GM12878 (cell line): ENCODE measurements at regions of chr1 and their contacts with region 1.

Region 1: DNA sequence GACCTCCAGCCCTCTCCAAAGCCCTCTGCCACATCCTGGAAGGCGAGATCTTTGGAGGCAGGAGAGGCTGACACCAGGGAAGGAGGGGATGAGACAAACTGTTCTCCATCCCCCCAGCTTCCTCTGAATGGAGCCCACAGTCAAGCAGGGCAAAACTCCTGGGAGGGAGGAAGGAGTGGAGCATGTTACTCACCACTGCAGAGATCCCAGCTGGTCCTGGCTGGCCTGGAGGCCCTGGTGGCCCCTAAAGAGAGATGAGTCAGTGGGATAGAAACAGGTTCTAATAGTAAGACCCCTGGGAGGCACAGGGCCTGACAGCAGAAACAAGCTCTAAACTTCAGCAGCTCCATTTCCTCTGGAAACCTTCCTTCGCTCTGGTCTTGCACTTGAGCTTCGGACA is 14.0 kb upstream of the PEF1 start:
- DNase-seq: no peak
- ATAC-seq: no peak
- H3K4me3 ChIP-seq: no peak overlapping the region
- H3K27ac ChIP-seq: no peak overlapping the region
- H3K4me1 ChIP-seq: no peaks in the 10 kb centered on the region
- H3K27me3 ChIP-seq: no peaks in the 10 kb centered on the region; a peak in 2 of 4 replicates
- CTCF ChIP-seq: no peak
- EP300 ChIP-seq: no peak
- POLR2A ChIP-seq: no peak
- RAD21 ChIP-seq: no peak

Region 2: GRCh38 chr1:31577515-31578192 is 81.1 kb before region 1 on chr1:
- CTCF ChIA-PET with region 1: no interaction called
- POLR2A ChIA-PET with region 1: no interaction called
- RAD21 ChIA-PET with region 1: no interaction called
- SMC1A ChIA-PET with region 1: no interaction called
- in situ Hi-C with region 1: no loop called
- intact Hi-C with region 1: no loop called
- DNase-seq: no peak
- ATAC-seq: no peak
- H3K4me3 ChIP-seq: no peak overlapping the region
- H3K27ac ChIP-seq: no peak overlapping the region
- H3K4me1 ChIP-seq: no peaks in the 10 kb centered on the region; the same call in 1 of the 2 replicates
- H3K27me3 ChIP-seq: peaks cover 0 to 3% of the 10 kb centered on the region in 2 experiments; a peak in 2 of 4 replicates
- CTCF ChIP-seq: no peak
- EP300 ChIP-seq: no peak
- POLR2A ChIP-seq: no peak
- RAD21 ChIP-seq: no peak

Region 3: DNA sequence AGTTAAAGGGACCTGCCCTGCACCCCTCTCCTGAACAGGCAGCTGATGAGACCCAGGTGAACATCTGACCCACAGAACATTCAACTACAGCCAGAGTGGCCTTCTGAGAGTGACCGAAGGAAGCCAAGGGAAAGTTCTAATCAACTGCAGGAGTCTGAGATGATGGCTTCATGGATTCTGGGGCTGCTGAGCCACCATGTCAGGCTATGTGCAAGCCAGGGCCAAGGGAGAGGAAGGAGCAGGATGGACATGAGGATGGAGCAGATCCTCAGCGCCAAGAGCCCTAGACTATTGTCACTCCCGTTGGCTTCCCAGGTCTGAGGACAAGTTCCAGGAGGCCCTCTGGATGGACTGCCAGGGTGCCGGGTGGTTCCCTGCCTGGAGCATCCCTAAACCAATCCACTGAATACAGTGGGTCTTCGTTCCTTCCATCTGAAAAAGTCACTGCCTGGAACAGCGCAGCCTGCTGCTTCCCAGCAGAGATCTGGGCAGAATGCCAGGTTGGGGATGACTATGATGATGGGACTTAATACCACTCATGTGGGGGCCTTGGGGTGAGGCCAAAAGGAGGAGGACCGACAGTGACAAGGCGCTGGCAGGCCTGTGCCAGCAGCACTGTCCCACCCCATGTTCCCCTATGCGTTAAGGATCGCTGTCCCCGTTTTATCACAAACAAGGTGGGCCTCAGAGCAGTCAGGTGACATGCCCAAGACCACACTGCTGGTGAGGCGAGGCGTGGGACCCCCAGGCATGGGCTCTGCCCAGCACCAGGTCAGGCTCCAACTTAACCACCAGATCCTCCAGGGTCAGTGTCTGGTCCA is 137.3 kb after region 1 on chr1:
- CTCF ChIA-PET with region 1: no interaction called
- POLR2A ChIA-PET with region 1: no interaction called
- RAD21 ChIA-PET with region 1: no interaction called
- SMC1A ChIA-PET with region 1: interaction called, 38 read pairs
- in situ Hi-C with region 1: loop called (anchors 5 kb)
- intact Hi-C with region 1: no loop called
- DNase-seq: no peak
- ATAC-seq: no peak
- H3K4me3 ChIP-seq: no peak overlapping the region
- H3K27ac ChIP-seq: no peak overlapping the region
- H3K4me1 ChIP-seq: no peaks in the 10 kb centered on the region
- H3K27me3 ChIP-seq: peaks cover 0 to 4% of the 10 kb centered on the region in 2 experiments
- CTCF ChIP-seq: no peak
- EP300 ChIP-seq: no peak
- POLR2A ChIP-seq: no peak
- RAD21 ChIP-seq: no peak

Region 4: DNA sequence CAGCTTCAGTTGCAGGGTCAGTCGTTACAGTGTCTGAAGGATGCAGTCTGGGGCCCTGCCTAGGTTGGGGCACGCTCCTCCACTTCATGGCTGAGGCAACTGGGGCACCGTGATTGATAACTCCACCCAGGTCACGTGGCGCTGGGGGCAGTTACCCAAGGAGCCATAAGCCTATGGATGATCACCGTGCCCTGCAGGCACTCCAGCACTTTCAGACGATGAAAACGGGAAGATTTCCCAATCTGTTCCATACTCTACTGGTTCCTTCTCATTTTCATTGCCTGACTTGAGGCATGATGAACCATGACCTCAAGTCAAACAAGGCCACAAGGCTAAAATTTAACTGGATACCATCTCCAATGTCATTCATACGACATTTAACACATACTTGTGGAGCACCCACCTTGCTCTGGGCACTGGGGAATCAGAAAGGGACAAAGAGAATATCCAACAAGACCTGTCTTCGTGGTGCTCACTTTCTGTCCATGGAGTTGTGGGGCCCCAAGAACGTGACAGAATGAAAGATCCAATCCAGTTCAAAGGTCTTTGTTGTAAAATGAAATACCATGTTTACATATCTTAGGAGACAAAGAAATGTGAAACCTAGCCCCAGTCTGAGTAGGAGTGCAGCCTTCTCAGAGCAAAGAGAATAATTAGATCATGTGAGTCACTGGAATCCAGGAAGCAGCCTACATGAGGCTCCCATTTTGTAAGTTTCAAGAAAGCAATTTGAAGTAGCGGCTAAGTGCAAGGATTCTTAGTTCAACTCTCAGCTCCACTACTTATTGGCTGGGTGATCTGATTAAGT is 196.5 kb after region 1 on chr1:
- CTCF ChIA-PET with region 1: no interaction called
- POLR2A ChIA-PET with region 1: no interaction called
- RAD21 ChIA-PET with region 1: no interaction called
- SMC1A ChIA-PET with region 1: no interaction called
- in situ Hi-C with region 1: no loop called
- intact Hi-C with region 1: no loop called
- DNase-seq: no peak
- ATAC-seq: no peak
- H3K4me3 ChIP-seq: no peak overlapping the region
- H3K27ac ChIP-seq: no peak overlapping the region
- H3K4me1 ChIP-seq: no peaks in the 10 kb centered on the region
- H3K27me3 ChIP-seq: no peaks in the 10 kb centered on the region
- CTCF ChIP-seq: no peak
- EP300 ChIP-seq: no peak
- POLR2A ChIP-seq: no peak
- RAD21 ChIP-seq: no peak